Natural killer cell (primary cell): ENCODE measurements at regions of chr6 and their contacts with region 1.

Region 1: GRCh38 chr6:108635505-108636226 is 74.9 kb downstream of the FOXO3 start:
- DNase-seq: peak; percentile 55 to 72
- ATAC-seq: peak; percentile 97 to 99 (median 98)
- H3K4me3 ChIP-seq: no peak overlapping the region
- H3K4me3 Mint-ChIP-seq: peak overlapping the region; percentile 48
- H3K27ac ChIP-seq: no peak overlapping the region
- H3K27ac Mint-ChIP-seq: peak overlapping the region; percentile 36 to 80
- H3K4me1 ChIP-seq: peaks cover 17% of the 10 kb centered on the region
- H3K4me1 Mint-ChIP-seq: peaks cover 67 to 71% of the 10 kb centered on the region in 2 donors
- H3K27me3 ChIP-seq: no peaks in the 10 kb centered on the region
- H3K27me3 Mint-ChIP-seq: no peaks in the 10 kb centered on the region
- CTCF ChIP-seq: no peak

Region 2: DNA sequence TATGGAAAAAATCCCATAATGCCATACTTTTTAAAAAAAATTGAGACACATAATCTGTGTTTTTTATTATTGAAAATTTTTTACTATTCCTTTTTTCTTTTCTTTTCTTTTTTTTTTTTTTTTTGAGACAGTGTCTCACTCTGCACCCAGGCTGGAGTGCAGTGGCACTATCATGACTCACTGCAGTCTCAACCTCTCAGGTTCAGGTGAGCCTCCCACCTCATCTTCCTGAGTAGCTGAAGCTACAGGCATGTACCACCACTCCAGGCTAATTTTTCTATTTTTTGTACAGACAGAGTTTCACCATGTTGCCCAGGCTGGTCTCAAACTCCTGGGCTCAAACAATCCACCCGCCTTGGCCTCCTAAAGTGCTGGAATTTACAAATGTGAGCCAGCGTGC is 240.4 kb before region 1 on chr6:
- intact Hi-C with region 1: no loop called
- DNase-seq: no peak
- ATAC-seq: no peak
- H3K4me3 ChIP-seq: no peak overlapping the region
- H3K4me3 Mint-ChIP-seq: no peak overlapping the region
- H3K27ac ChIP-seq: no peak overlapping the region
- H3K27ac Mint-ChIP-seq: no peak overlapping the region
- H3K4me1 ChIP-seq: no peaks in the 10 kb centered on the region
- H3K4me1 Mint-ChIP-seq: no peaks in the 10 kb centered on the region
- H3K27me3 ChIP-seq: no peaks in the 10 kb centered on the region
- H3K27me3 Mint-ChIP-seq: no peaks in the 10 kb centered on the region
- CTCF ChIP-seq: no peak

Region 3: GRCh38 chr6:108565893-108566292 is 69.8 kb before region 1 on chr6:
- intact Hi-C with region 1: loop called (anchors 5 kb)
- DNase-seq: peak in 1 of 2 donors; percentile 40
- ATAC-seq: peak; percentile 32 to 65 (median 36)
- H3K4me3 ChIP-seq: no peak overlapping the region
- H3K4me3 Mint-ChIP-seq: peak overlapping the region; percentile 76
- H3K27ac ChIP-seq: peak overlapping the region; percentile 68
- H3K27ac Mint-ChIP-seq: peak overlapping the region; percentile 79 to 91
- H3K4me1 ChIP-seq: peaks cover 38% of the 10 kb centered on the region
- H3K4me1 Mint-ChIP-seq: peaks cover 75 to 76% of the 10 kb centered on the region in 2 donors
- H3K27me3 ChIP-seq: no peaks in the 10 kb centered on the region
- H3K27me3 Mint-ChIP-seq: no peaks in the 10 kb centered on the region
- CTCF ChIP-seq: no peak

Region 4: DNA sequence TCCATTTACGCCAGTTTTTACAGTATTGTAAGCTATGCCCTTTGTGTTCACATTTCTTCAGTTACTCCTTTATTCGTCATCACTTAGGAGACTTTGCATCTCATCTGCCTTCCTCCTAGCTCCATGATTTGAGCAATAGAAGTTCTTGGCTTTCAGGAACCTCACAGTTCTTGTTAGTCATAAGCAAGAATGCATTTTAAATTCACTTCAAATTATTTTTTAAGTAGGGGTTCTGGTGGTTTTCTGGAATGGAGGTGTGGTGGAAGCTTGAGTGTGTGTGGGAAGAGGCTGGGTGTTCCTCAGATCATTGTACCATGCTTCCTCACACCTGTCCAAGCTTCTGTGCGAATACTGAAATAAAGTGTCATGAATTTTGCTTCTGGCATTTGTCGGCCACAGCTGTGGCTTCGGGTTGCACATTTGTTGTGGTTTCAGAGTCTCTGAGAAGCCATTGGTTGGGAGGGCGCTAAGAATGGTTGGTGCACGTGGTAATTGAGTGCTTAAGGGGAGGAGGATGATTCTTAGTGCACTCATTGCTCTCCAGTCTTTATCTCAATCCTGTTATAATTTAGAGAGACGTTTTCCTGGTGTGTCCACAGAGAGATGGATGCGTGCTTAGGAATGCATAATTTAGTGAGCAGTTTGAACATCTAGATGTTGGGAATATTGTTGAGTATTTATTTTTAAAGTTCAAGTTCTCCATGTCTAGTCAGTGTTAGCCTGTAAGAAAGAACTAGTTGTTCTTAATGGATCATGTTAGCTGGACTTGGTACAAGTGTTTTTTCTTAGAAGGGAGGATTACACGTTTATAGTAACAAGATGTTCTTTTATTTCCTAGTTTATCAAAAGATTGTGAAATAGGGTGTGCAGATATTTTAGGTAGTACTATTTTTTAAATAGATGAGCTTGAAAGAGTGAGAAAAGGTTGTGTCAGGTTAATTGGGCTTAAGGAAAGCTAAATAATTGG is 43.0 kb before region 1 on chr6:
- intact Hi-C with region 1: loop called (anchors 5 kb)
- DNase-seq: peak; percentile 66 to 78
- ATAC-seq: peak; percentile 85 to 97 (median 91)
- H3K4me3 ChIP-seq: no peak overlapping the region
- H3K4me3 Mint-ChIP-seq: peak overlapping the region; percentile 71
- H3K27ac ChIP-seq: peak overlapping the region; percentile 34
- H3K27ac Mint-ChIP-seq: peak overlapping the region; percentile 69 to 73
- H3K4me1 ChIP-seq: peaks cover 33% of the 10 kb centered on the region
- H3K4me1 Mint-ChIP-seq: peaks cover 81 to 93% of the 10 kb centered on the region in 2 donors
- H3K27me3 ChIP-seq: no peaks in the 10 kb centered on the region
- H3K27me3 Mint-ChIP-seq: no peaks in the 10 kb centered on the region
- CTCF ChIP-seq: no peak